HEK293 (cell line): ENCODE measurements at regions of chr17 and their contacts with region 1.

Region 1: DNA sequence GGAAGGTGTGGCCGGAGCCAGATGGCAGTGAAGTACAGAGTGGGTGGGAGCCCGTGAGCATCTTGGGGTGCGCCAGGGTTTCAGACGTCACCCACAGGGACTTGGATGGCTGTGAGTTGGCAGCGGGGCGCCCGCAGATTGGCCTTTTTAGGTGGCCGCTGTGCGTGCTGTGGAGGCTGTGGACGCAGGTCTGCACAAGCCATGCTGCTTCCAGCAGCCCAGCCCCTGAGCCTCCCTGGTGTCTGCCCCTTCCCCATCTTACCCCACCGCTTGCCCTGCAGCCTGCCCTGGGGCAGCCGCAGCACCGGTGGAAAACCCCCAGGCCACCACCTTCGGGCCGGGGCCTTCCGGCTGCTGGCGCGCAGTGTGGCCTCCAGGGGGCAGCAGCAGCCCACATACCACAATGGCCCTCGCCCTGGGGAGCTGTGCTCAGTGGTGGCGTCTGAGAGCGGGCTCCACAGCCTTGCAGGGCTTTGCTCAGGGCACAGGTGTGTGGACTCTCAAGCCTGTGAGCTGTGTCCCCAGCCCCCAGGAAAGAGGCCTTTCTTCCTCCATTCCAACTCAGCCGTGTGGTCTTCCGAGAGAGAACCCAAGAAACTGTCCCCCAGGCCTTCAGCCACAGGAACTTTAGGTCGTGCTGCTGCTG is 11.8 kb downstream of the ENDOV start:
- H3K4me3 ChIP-seq: no peak overlapping the region
- H3K27ac ChIP-seq: no peak overlapping the region
- H3K4me1 ChIP-seq: no peaks in the 10 kb centered on the region
- CTCF ChIP-seq: peak; percentile 98

Region 2: GRCh38 chr17:80441133-80441578 is 14.4 kb after region 1 on chr17:
- CTCF ChIA-PET with region 1: interaction called, 12 read pairs
- POLR2A ChIA-PET with region 1: no interaction called
- H3K4me3 ChIP-seq: no peak overlapping the region
- H3K27ac ChIP-seq: no peak overlapping the region
- H3K4me1 ChIP-seq: no peaks in the 10 kb centered on the region
- CTCF ChIP-seq: no peak

Region 3: DNA sequence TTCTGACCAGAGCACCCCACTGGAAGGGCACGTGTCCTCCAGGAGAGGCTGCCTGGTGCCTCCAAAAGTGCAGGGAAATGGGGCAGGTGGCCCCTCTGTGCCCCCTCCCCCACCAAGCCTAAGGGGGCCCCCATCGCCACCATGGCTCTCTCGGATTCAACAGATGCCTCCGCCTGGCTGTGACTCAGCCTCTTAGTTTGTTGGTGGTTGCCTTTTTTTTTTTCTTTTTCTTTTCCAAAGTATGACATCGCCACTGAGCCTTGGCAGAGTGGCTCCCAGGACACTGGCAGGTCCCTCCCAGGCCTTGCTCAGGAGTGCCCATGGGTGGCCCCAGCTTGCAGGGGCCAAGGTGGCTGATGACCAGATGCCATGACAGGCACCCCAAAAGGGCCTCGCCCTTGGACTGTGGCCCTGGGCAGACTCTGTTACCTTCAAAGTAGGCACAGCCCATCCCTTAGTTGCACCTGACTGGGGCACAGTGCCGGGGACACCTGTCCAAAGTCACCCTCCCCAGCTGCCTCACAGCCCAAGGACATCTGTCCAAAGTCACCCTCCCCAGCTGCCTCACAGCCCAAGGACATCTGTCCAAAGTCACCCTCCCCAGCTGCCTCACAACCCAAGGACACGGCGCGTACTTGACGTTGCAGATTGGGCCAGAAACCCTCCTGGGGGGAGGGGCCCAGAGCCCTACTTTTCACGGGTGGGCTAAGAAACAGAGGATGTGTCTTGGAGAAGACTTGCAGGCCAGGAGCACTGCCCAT is 20.0 kb after region 1 on chr17:
- CTCF ChIA-PET with region 1: interaction called, 11 read pairs
- POLR2A ChIA-PET with region 1: no interaction called
- H3K4me3 ChIP-seq: no peak overlapping the region
- H3K27ac ChIP-seq: no peak overlapping the region
- H3K4me1 ChIP-seq: peaks cover 5% of the 10 kb centered on the region; the same call in 1 of the 2 replicates
- CTCF ChIP-seq: no peak

Region 4: DNA sequence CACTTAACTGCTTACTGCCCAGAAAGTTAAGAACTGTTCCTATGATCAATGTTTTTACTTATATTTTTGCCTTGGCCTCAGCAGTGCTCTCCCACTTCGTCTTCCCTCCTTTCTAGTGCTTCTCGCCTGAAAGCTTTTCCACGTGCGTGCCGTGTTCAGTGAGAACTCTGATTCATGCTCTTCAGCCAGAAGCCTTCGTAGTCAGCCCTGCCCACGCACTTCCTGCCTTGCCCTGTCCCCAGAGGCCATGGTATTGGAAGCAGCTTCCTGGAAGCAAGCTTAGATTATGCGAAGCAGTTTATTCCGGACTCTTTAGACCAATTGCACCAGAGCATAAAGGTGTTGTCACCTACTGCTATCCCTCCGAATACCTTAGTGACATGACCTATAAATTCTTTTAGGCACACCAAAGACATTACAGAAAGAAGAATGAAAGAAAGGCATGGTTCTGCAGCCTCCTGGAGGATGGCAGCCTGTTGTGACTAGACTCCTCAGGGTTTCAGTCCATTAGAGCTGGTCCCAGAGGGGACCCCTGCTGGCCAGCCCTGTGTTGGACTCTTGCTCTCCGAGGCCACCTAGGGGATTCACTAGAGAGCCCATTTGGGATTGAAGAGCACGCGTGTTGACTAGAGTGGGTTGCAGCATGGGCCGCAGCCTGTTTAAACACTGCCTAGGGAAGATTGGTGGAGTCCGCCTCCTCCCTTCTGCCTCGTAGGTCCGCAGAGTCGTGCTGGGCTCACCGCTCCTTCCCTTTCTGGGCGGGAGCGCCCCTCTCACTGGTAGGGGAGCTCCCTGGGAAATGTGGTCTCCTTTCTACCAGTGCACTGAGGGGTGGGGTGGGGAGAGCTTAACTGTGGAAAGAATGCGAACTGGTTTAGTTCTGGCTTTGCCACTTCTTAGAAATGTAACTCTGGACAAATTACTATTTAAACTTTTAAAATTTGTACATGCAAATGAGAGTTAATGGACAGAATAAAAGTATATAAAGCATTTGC is 223.2 kb after region 1 on chr17:
- CTCF ChIA-PET with region 1: interaction called, 15 read pairs
- POLR2A ChIA-PET with region 1: no interaction called
- H3K4me3 ChIP-seq: no peak overlapping the region
- H3K27ac ChIP-seq: no peak overlapping the region
- H3K4me1 ChIP-seq: peaks cover 17% of the 10 kb centered on the region
- CTCF ChIP-seq: peak; percentile 66

Region 5: DNA sequence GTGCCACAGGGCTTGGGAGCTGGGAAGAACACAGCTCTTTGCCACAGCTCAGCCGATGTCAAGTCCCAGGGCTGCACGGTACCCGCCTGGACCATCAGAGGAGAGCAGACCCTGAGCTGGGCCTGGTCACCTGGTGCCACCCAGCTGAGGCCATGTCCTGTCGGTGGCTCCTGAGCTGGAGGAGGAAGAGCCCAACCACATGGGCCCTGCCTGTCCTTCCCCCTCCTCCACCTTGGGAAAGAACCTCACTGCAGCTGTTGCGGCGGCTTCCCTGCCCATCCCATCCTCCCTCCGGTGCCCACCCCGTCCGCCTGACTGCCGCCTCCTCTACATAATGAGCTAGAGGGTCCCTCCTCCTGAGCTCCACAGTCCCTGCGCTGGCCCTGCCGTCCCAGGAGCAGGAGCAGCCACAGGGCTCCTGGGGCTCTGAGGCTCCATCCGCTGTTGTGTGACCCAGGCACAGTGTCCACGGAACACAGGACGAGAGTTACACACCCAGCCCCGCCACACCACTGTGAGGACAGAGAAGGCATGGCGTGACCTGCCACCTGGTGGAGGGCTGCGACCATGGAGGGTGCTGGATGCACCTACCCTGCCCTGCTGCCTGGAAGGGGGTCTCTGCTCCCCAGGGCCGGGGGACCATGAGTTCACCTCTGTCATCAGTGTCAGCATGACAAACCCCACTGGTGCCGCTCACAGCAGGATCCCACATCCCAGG is 543.4 kb after region 1 on chr17:
- CTCF ChIA-PET with region 1: interaction called, 14 read pairs
- POLR2A ChIA-PET with region 1: no interaction called
- H3K4me3 ChIP-seq: no peak overlapping the region
- H3K27ac ChIP-seq: no peak overlapping the region
- H3K4me1 ChIP-seq: no peaks in the 10 kb centered on the region
- CTCF ChIP-seq: peak; percentile 87

Region 6: GRCh38 chr17:80981062-80981902 is 554.5 kb after region 1 on chr17:
- CTCF ChIA-PET with region 1: interaction called, 17 read pairs
- POLR2A ChIA-PET with region 1: interaction called, 3 read pairs
- H3K4me3 ChIP-seq: peak overlapping the region; percentile 29
- H3K27ac ChIP-seq: no peak overlapping the region
- H3K4me1 ChIP-seq: no peaks in the 10 kb centered on the region
- CTCF ChIP-seq: no peak